PC-9 (cell line): ENCODE measurements at regions of chr19 and their contacts with region 1.

Region 1: GRCh38 chr19:18762125-18763023 is 28.7 kb downstream of the COMP start:
- DNase-seq: peak; percentile 87 to 94
- H3K4me3 ChIP-seq: no peak overlapping the region
- H3K27ac ChIP-seq: no peak overlapping the region
- H3K4me1 ChIP-seq: peaks cover 40% of the 10 kb centered on the region
- H3K27me3 ChIP-seq: no peaks in the 10 kb centered on the region
- CTCF ChIP-seq: no peak

Region 2: GRCh38 chr19:18571564-18572300 is 190.6 kb before region 1 on chr19 and contains the start of gene UBA52:
- CTCF ChIA-PET with region 1: no interaction called
- POLR2A ChIA-PET with region 1: no interaction called
- intact Hi-C with region 1: no loop called
- DNase-seq: peak; percentile 95 to 99
- H3K4me3 ChIP-seq: peak within 1 kb of the TSS; percentile 91
- H3K27ac ChIP-seq: peak within 1 kb of the TSS; percentile 74
- H3K4me1 ChIP-seq: peaks cover 18% of the 10 kb centered on the region
- H3K27me3 ChIP-seq: no peaks in the 10 kb centered on the region
- CTCF ChIP-seq: no peak
- total RNA-seq, gene UBA52: 1,141 and 1,151 TPM in 2 replicates

Region 3: DNA sequence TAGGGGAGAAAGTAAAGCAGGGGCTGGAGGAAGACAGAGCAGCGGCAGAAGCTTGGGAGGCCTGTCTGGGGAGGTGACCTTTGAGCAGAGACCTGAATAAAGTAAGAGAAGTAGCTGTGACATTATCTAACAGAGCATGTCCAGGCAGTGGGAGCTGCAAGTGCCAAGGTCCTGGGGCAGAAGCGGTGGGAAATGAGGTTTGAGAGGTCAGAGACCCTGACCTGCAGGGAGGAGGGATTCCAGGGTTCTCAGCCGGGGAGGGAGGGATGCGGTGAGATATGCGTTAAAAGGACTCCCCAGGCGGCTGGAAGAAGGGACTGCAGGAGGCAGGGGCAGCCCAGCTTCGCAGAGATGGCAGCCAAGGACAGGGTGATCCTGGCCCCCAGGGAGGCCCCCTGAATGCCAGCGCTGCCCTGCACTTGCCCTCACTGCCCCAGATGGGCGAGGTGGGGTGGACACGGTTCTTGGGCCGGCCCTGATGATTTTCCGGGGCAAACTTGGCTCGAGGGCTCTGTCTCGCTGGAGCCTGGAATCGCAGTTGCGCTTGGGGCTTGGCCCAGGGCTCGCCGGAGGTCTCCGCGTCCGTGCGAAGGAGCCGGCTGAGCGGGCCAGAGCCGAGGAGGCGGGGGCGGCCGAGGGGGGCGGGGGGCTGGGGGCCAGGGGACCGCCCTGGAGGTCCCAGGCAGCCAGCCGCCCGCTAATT is 159.0 kb before region 1 on chr19:
- CTCF ChIA-PET with region 1: no interaction called
- POLR2A ChIA-PET with region 1: no interaction called
- intact Hi-C with region 1: loop called (anchors 10 kb)
- DNase-seq: no peak
- H3K4me3 ChIP-seq: no peak overlapping the region
- H3K27ac ChIP-seq: no peak overlapping the region
- H3K4me1 ChIP-seq: peaks cover 8% of the 10 kb centered on the region
- H3K27me3 ChIP-seq: peaks cover 31% of the 10 kb centered on the region
- CTCF ChIP-seq: no peak

Region 4: GRCh38 chr19:18675779-18676178 is 86.6 kb before region 1 on chr19:
- CTCF ChIA-PET with region 1: interaction called, 10 read pairs
- POLR2A ChIA-PET with region 1: no interaction called
- intact Hi-C with region 1: loop called (anchors 1 kb)
- DNase-seq: peak in 1 of 2 experiments; percentile 33
- H3K4me3 ChIP-seq: no peak overlapping the region
- H3K27ac ChIP-seq: no peak overlapping the region
- H3K4me1 ChIP-seq: peaks cover 24% of the 10 kb centered on the region
- H3K27me3 ChIP-seq: no peaks in the 10 kb centered on the region
- CTCF ChIP-seq: peak; percentile 64

Region 5: DNA sequence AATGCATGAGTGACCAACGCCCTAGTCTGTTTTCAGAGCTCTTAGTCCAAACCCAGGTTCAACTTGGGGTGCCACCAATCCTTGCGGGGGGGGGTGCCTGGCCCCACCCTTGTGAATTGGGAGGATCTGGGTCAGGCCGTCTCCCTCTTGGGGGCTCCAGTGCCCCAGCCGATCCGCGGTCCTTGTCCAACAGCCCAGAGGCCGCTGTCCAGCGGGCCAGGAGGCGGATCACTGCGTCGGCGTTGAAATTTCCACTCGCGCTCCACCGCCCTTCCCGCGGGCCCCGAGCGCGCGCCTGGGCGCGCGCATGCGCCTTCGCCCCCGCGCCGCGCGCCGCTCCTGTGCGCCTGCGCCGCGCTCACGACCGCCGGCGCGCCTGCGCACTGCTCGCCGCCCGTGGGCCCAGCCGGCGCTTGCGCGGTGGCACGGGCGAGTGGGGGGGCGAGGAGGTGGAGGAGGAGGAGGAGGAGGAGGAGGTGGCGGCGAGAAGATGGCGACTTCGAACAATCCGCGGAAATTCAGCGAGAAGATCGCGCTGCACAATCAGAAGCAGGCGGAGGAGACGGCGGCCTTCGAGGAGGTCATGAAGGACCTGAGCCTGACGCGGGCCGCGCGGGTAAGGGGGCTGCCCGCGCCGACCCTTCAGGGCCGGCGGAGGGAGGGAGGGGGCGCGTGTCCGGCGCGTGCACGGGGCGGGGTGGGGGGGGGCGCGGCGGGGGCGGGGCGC is 79.0 kb before region 1 on chr19 and contains the start of gene CRTC1:
- CTCF ChIA-PET with region 1: no interaction called
- POLR2A ChIA-PET with region 1: no interaction called
- intact Hi-C with region 1: loop called (anchors 1 kb)
- DNase-seq: peak; percentile 65 to 94
- H3K4me3 ChIP-seq: peak within 1 kb of the TSS; percentile 80
- H3K27ac ChIP-seq: 0 out of 2 replicates have a peak within 1 kb of the TSS, but pooled peaks have one; percentile 6
- H3K4me1 ChIP-seq: peaks cover 31% of the 10 kb centered on the region
- H3K27me3 ChIP-seq: no peaks in the 10 kb centered on the region
- CTCF ChIP-seq: no peak
- total RNA-seq, gene CRTC1: 13.3 and 16.6 TPM in 2 replicates

Region 6: GRCh38 chr19:18710996-18711751 is 51.2 kb before region 1 on chr19:
- CTCF ChIA-PET with region 1: no interaction called
- POLR2A ChIA-PET with region 1: no interaction called
- intact Hi-C with region 1: no loop called
- DNase-seq: no peak
- H3K4me3 ChIP-seq: no peak overlapping the region
- H3K27ac ChIP-seq: no peak overlapping the region
- H3K4me1 ChIP-seq: no peaks in the 10 kb centered on the region
- H3K27me3 ChIP-seq: no peaks in the 10 kb centered on the region
- CTCF ChIP-seq: no peak

Region 7: GRCh38 chr19:18780631-18781030 is 18.3 kb after region 1 on chr19:
- CTCF ChIA-PET with region 1: interaction called, 14 read pairs
- POLR2A ChIA-PET with region 1: interaction called, 5 read pairs
- intact Hi-C with region 1: no loop called
- DNase-seq: no peak
- H3K4me3 ChIP-seq: no peak overlapping the region
- H3K27ac ChIP-seq: no peak overlapping the region
- H3K4me1 ChIP-seq: no peaks in the 10 kb centered on the region
- H3K27me3 ChIP-seq: no peaks in the 10 kb centered on the region
- CTCF ChIP-seq: no peak

Region 8: DNA sequence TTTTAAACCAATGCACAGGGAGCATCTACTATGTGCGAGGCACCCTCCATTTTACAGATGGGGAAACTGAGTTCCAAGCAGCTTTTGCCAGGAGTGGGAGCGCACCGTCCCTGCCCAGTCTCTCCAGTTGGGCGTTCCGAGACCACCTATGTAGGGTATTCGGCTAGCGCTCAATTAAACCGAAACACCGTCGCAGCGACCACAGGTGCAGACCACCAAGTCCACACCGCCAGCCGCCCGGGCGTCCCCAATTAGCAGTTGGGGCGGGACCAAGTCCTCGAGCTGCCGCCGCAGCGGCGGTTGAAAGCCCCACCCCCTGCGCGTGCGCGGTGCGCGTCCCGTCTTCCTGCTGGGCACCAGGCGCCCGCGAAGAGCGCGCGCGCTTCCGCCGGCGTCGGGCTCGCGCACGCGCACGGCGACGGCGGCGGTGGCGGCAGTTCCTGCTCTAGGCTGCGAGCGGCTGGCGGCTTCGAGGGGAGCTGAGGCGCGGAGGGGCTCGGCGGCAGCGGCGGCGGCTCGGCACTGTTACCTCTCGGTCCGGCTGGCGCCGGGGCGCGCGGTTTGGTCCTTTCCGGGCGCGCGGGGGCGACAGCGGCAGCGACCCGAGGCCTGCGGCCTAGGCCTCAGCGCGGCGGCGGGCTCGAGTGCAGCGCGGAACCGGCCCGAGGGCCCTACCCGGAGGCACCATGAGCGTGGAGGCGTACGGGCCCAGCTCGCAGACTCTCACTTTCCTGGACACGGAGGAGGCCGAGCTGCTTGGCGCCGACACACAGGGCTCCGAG is 69.3 kb after region 1 on chr19 and contains the start of gene UPF1:
- CTCF ChIA-PET with region 1: no interaction called
- POLR2A ChIA-PET with region 1: interaction called, 4 read pairs
- intact Hi-C with region 1: loop called (anchors 1 kb)
- DNase-seq: peak; percentile 80 to 91
- H3K4me3 ChIP-seq: peak within 1 kb of the TSS; percentile 95
- H3K27ac ChIP-seq: peak within 1 kb of the TSS; percentile 7; the same call in 1 of the 2 replicates
- H3K4me1 ChIP-seq: peaks cover 22% of the 10 kb centered on the region
- H3K27me3 ChIP-seq: no peaks in the 10 kb centered on the region
- CTCF ChIP-seq: no peak
- total RNA-seq, gene UPF1: 78.8 and 93.0 TPM in 2 replicates

Region 9: GRCh38 chr19:18846862-18847548 is 84.6 kb after region 1 on chr19:
- CTCF ChIA-PET with region 1: no interaction called
- POLR2A ChIA-PET with region 1: no interaction called
- intact Hi-C with region 1: loop called (anchors 5 kb)
- DNase-seq: peak in 1 of 2 experiments; percentile 66
- H3K4me3 ChIP-seq: no peak overlapping the region
- H3K27ac ChIP-seq: no peak overlapping the region
- H3K4me1 ChIP-seq: no peaks in the 10 kb centered on the region
- H3K27me3 ChIP-seq: no peaks in the 10 kb centered on the region
- CTCF ChIP-seq: peak; percentile 93